A549 (cell line): ENCODE measurements at regions of chr21 and their contacts with region 1.

Region 1: GRCh38 chr21:41678944-41679343 is 87.9 kb downstream of the RIPK4 start:
- DNase-seq: peak; percentile 90 to 99
- ATAC-seq: peak; percentile 88
- H3K4me3 ChIP-seq: peak overlapping the region; percentile 50
- H3K27ac ChIP-seq: peak overlapping the region; percentile 98
- H3K4me1 ChIP-seq: peaks cover 60% of the 10 kb centered on the region
- CTCF ChIP-seq: no peak
- EP300 ChIP-seq: no peak
- POLR2A ChIP-seq: peak; percentile 57
- RAD21 ChIP-seq: 0 out of 5 replicates have a peak, but pooled peaks of 1 of the 2 experiments have one; percentile 6

Region 2: DNA sequence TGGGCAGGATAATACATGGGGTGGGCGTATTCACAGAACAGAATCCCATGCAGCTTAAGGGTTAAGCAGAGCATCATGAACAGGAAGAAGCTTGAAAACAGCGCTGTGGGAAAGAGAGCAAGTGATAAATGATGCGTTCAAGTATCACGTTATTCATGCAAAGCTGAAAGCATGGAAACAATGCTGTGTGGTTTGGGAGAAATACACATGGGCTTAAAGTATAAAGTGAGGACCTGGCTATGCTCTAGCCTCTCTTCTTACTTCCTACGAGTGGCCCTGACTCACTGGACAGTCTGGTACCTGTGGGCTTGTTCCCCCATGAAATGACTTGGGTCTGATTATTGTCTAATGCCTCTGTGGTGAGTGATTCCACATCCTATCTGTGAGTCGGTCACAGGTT is 196.6 kb before region 1 on chr21:
- CTCF ChIA-PET with region 1: no interaction called
- POLR2A ChIA-PET with region 1: no interaction called
- DNase-seq: no peak
- ATAC-seq: no peak
- H3K4me3 ChIP-seq: no peak overlapping the region
- H3K27ac ChIP-seq: no peak overlapping the region
- H3K4me1 ChIP-seq: no peaks in the 10 kb centered on the region
- CTCF ChIP-seq: no peak
- EP300 ChIP-seq: no peak
- POLR2A ChIP-seq: no peak
- RAD21 ChIP-seq: no peak

Region 3: DNA sequence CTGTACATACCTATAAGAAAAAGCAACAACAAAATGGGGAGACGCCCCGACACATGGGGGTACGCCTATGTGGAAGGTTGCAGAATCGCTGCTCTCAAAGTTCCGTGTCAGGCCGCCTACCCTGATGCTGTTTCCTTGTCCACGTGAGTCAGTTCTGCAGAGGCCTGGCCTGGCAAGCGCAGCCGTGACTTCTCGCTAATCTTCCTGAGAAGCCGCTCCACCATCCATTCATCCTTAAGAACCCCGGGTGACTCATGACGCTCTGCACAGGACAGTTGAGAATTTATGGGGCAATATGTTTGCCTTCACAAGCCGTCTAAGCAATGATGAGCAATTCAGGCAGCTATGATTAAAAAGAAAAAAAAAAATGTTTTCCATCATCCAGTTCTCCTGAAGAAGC is 48.7 kb before region 1 on chr21:
- CTCF ChIA-PET with region 1: interaction called, 3 read pairs
- POLR2A ChIA-PET with region 1: interaction called, 36 read pairs
- DNase-seq: peak; percentile 85 to 98
- ATAC-seq: peak; percentile 94 to 95
- H3K4me3 ChIP-seq: no peak overlapping the region
- H3K27ac ChIP-seq: peak overlapping the region; percentile 85 to 94
- H3K4me1 ChIP-seq: peaks cover 54% of the 10 kb centered on the region
- CTCF ChIP-seq: no peak
- EP300 ChIP-seq: peak; percentile 74 to 84; a peak in 3 of 5 replicates
- POLR2A ChIP-seq: no peak
- RAD21 ChIP-seq: peak in 1 of 2 experiments; percentile 30; a peak in 3 of 5 replicates

Region 4: GRCh38 chr21:41641821-41642701 is 36.9 kb before region 1 on chr21:
- CTCF ChIA-PET with region 1: no interaction called
- POLR2A ChIA-PET with region 1: interaction called, 13 read pairs
- DNase-seq: peak; percentile 43 to 72
- ATAC-seq: peak; percentile 89 to 90
- H3K4me3 ChIP-seq: no peak overlapping the region
- H3K27ac ChIP-seq: peak overlapping the region; percentile 86 to 91
- H3K4me1 ChIP-seq: peaks cover 22% of the 10 kb centered on the region
- CTCF ChIP-seq: no peak
- EP300 ChIP-seq: 0 out of 5 replicates have a peak, but pooled peaks of 1 of the 2 experiments have one; percentile 38
- POLR2A ChIP-seq: no peak
- RAD21 ChIP-seq: no peak

Region 5: GRCh38 chr21:41761211-41762181 is 82.6 kb after region 1 on chr21:
- CTCF ChIA-PET with region 1: interaction called, 3 read pairs
- POLR2A ChIA-PET with region 1: interaction called, 36 read pairs
- DNase-seq: peak in 1 of 2 experiments; percentile 51
- ATAC-seq: peak; percentile 54 to 67; a peak in 5 of 6 replicates
- H3K4me3 ChIP-seq: peak overlapping the region; percentile 36
- H3K27ac ChIP-seq: peak overlapping the region; percentile 88 to 92
- H3K4me1 ChIP-seq: peaks cover 65% of the 10 kb centered on the region
- CTCF ChIP-seq: no peak
- EP300 ChIP-seq: no peak
- POLR2A ChIP-seq: no peak
- RAD21 ChIP-seq: no peak

Region 6: DNA sequence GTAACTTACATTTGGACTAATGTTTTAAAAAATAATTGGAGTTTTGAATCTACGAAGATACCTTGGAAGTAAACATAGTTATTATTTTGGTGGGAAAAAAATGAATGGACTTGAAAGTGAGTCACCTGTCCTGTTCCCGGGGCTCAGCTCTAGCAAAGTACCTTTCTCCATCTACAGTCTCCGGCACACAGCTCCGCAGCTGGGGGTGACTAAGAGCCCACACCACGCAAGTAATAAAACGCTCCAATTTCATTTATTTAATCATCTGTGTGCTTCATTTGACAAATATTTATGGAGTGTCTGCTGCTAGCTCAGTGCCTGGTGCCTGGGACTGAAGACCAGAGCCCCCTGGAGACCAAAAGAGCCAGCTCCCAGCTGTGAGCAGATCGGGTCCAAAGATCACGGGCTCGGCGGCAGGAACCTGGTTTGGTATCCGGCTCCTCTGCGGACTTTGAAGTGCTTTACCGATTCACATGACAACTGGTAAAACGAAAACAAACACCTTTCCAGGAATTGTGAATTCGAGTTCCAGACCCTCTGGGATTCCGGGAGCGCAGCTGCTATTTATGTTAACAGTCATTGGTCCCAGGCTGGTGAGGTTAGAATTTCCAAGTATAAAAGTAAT is 89.6 kb after region 1 on chr21:
- CTCF ChIA-PET with region 1: interaction called, 8 read pairs
- POLR2A ChIA-PET with region 1: interaction called, 36 read pairs
- DNase-seq: peak in 1 of 2 experiments; percentile 80
- ATAC-seq: peak; percentile 72 to 74
- H3K4me3 ChIP-seq: peak overlapping the region; percentile 92
- H3K27ac ChIP-seq: peak overlapping the region; percentile 74 to 92
- H3K4me1 ChIP-seq: peaks cover 27% of the 10 kb centered on the region
- CTCF ChIP-seq: peak; percentile 35; the same call in 2 of the 3 replicates
- EP300 ChIP-seq: 0 out of 5 replicates have a peak, but pooled peaks of 1 of the 2 experiments have one; percentile 21
- POLR2A ChIP-seq: no peak
- RAD21 ChIP-seq: peak; percentile 43 to 50; a peak in 4 of 5 replicates